Naive thymus-derived CD4-positive, alpha-beta T cell (primary cell): ENCODE measurements at regions of chr20 and their contacts with region 1.

Region 1: GRCh38 chr20:4956200-4956810 is 45.0 kb downstream of the SLC23A2 start:
- DNase-seq: peak in 7 of 9 donors; percentile 37 to 67 (median 55)
- ATAC-seq: peak; percentile 86
- H3K4me3 ChIP-seq: no peak overlapping the region
- H3K4me3 Mint-ChIP-seq: no peak overlapping the region
- H3K27ac ChIP-seq: no peak overlapping the region
- H3K27ac Mint-ChIP-seq: peak overlapping the region in 1 of 9 donors; percentile 4
- H3K4me1 ChIP-seq: peaks cover 1 to 2% of the 10 kb centered on the region in 2 donors
- H3K4me1 Mint-ChIP-seq: peaks cover under 1 to 19% (median 14%) of the 10 kb centered on the region in 7 donors
- H3K27me3 ChIP-seq: no peaks in the 10 kb centered on the region
- H3K27me3 Mint-ChIP-seq: no peaks in the 10 kb centered on the region

Region 2: DNA sequence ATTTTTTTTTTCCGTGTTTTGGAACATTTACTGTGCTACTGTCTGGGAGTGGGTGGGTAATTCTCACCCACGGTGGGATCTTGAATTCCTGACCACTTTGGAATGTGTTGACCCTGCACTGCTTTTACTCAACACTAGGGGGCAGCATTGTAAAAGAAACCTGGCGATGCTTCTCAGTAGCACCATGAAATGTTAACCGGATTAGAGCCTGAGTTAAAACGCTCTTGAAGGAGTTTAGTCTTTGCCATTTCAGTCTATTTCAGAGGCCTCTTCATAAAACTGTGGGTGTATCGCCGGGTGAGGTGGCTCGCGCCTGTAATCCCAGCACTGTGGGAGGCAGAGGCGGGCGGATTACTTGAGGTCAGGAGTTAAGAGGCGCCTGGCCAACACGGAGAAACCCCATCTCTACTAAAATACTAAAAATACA is 349.0 kb before region 1 on chr20:
- CTCF ChIA-PET with region 1: no interaction called
- POLR2A ChIA-PET with region 1: no interaction called
- intact Hi-C with region 1: loop called in 1 of 2 experiments (anchors 1 kb)
- DNase-seq: peak in 8 of 9 donors; percentile 43 to 75 (median 68)
- ATAC-seq: peak; percentile 93
- H3K4me3 ChIP-seq: no peak overlapping the region
- H3K4me3 Mint-ChIP-seq: no peak overlapping the region
- H3K27ac ChIP-seq: no peak overlapping the region
- H3K27ac Mint-ChIP-seq: no peak overlapping the region
- H3K4me1 ChIP-seq: no peaks in the 10 kb centered on the region
- H3K4me1 Mint-ChIP-seq: peaks cover 0 to 8% (median 0%) of the 10 kb centered on the region in 7 donors
- H3K27me3 ChIP-seq: no peaks in the 10 kb centered on the region
- H3K27me3 Mint-ChIP-seq: peaks cover 17 to 31% (median 20%) of the 10 kb centered on the region in 5 donors

Region 3: GRCh38 chr20:4780245-4780644 is 176.1 kb before region 1 on chr20:
- CTCF ChIA-PET with region 1: interaction called, 11 read pairs
- POLR2A ChIA-PET with region 1: no interaction called
- intact Hi-C with region 1: loop called in 1 of 2 experiments (anchors 1 kb)
- DNase-seq: peak in 6 of 9 donors; percentile 18 to 40 (median 27)
- ATAC-seq: peak; percentile 41
- H3K4me3 ChIP-seq: no peak overlapping the region
- H3K4me3 Mint-ChIP-seq: no peak overlapping the region
- H3K27ac ChIP-seq: no peak overlapping the region
- H3K27ac Mint-ChIP-seq: peak overlapping the region in 8 of 9 donors; percentile 63 to 82 (median 74)
- H3K4me1 ChIP-seq: no peaks in the 10 kb centered on the region
- H3K4me1 Mint-ChIP-seq: peaks cover 6 to 28% (median 16%) of the 10 kb centered on the region in 7 donors
- H3K27me3 ChIP-seq: no peaks in the 10 kb centered on the region
- H3K27me3 Mint-ChIP-seq: no peaks in the 10 kb centered on the region

Region 4: GRCh38 chr20:5100684-5101347 is 144.5 kb after region 1 on chr20:
- CTCF ChIA-PET with region 1: interaction called, 30 read pairs
- POLR2A ChIA-PET with region 1: no interaction called
- intact Hi-C with region 1: loop called (anchors 1 to 5 kb)
- DNase-seq: peak; percentile 51 to 77 (median 67)
- ATAC-seq: peak; percentile 97
- H3K4me3 ChIP-seq: no peak overlapping the region
- H3K4me3 Mint-ChIP-seq: no peak overlapping the region
- H3K27ac ChIP-seq: peak overlapping the region; percentile 43
- H3K27ac Mint-ChIP-seq: peak overlapping the region; percentile 44 to 78 (median 69)
- H3K4me1 ChIP-seq: peaks cover 3 to 9% of the 10 kb centered on the region in 2 donors
- H3K4me1 Mint-ChIP-seq: peaks cover 5 to 20% (median 12%) of the 10 kb centered on the region in 7 donors
- H3K27me3 ChIP-seq: no peaks in the 10 kb centered on the region
- H3K27me3 Mint-ChIP-seq: no peaks in the 10 kb centered on the region

Region 5: GRCh38 chr20:5448449-5449118 is 492.3 kb after region 1 on chr20:
- CTCF ChIA-PET with region 1: interaction called, 3 read pairs
- POLR2A ChIA-PET with region 1: no interaction called
- intact Hi-C with region 1: loop called in 1 of 2 experiments (anchors 5 kb)
- DNase-seq: peak in 6 of 9 donors; percentile 2 to 42 (median 28)
- ATAC-seq: no peak
- H3K4me3 ChIP-seq: no peak overlapping the region
- H3K4me3 Mint-ChIP-seq: no peak overlapping the region
- H3K27ac ChIP-seq: no peak overlapping the region
- H3K27ac Mint-ChIP-seq: no peak overlapping the region
- H3K4me1 ChIP-seq: no peaks in the 10 kb centered on the region
- H3K4me1 Mint-ChIP-seq: peaks cover 0 to 3% (median 0%) of the 10 kb centered on the region in 7 donors
- H3K27me3 ChIP-seq: no peaks in the 10 kb centered on the region
- H3K27me3 Mint-ChIP-seq: peaks cover 15 to 44% (median 24%) of the 10 kb centered on the region in 5 donors